Head of caudate nucleus (tissue), 42 donors: ENCODE measurements at regions of chr12 and their contacts with region 1.

Region 1: GRCh38 chr12:74111688-74112360 is 425.8 kb upstream of the ATXN7L3B start:
- DNase-seq: peak in 40 of 42 donors; percentile 12 to 79 (median 48)

Region 2: GRCh38 chr12:74415633-74416032 is 303.8 kb after region 1 on chr12:
- intact Hi-C with region 1: loop called (anchors 5 kb)
- DNase-seq: peak in 12 of 42 donors; percentile 20 to 63 (median 34)